PC-9 (cell line): ENCODE measurements at regions of chr18 and their contacts with region 1.

Region 1: DNA sequence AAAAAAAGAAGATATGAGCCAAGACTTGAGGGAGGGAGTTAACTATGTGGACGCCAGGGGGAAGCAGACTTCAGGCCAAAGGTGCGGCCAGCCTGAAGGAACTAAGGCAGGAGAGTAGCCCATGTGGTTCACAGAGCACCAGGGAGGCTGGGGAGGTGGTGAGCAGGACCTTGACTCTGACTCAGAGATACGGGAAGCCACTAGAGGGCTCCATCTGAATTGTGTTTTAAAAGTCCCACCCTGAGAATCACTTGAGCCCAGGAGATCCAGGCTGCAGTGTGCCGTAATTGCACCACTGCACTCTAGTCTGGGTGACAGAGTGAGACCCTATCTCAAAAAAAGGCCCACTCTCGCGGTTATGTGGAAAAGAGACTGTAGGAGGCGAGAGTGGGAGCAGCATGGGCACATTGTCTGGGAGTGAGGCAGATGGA is 12.3 kb downstream of the CEP192 start:
- DNase-seq: no peak
- H3K4me3 ChIP-seq: no peak overlapping the region
- H3K27ac ChIP-seq: no peak overlapping the region
- H3K4me1 ChIP-seq: no peaks in the 10 kb centered on the region
- H3K27me3 ChIP-seq: no peaks in the 10 kb centered on the region
- CTCF ChIP-seq: peak; percentile 53; the same call in 1 of the 2 replicates

Region 2: GRCh38 chr18:12361770-12362378 is 641.6 kb before region 1 on chr18:
- CTCF ChIA-PET with region 1: no interaction called
- POLR2A ChIA-PET with region 1: interaction called, 11 read pairs
- intact Hi-C with region 1: no loop called
- DNase-seq: no peak
- H3K4me3 ChIP-seq: no peak overlapping the region
- H3K27ac ChIP-seq: no peak overlapping the region
- H3K4me1 ChIP-seq: no peaks in the 10 kb centered on the region
- H3K27me3 ChIP-seq: no peaks in the 10 kb centered on the region
- CTCF ChIP-seq: no peak

Region 3: DNA sequence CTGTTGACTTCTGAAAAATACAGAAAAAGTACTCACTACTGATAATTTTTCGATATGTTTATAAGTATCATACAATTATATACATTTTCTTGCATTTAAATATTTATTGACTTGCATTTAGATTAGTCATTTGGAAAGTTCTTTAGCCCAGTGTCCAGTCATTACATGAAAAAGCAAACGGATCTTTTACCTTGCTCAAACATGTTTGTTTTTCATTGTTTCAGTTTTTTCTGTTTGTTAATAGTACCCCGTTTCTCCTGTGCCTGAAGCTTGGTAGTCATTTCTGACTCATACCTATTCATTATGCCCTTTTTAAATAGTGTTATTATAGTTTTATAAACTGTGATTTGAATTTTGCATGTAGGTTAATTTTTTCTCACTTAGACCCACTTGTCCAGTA is 15.8 kb after region 1 on chr18:
- CTCF ChIA-PET with region 1: no interaction called
- POLR2A ChIA-PET with region 1: no interaction called
- intact Hi-C with region 1: loop called (anchors 1 kb)
- DNase-seq: no peak
- H3K4me3 ChIP-seq: no peak overlapping the region
- H3K27ac ChIP-seq: 0 out of 2 replicates have a peak overlapping the region, but pooled peaks have one; percentile 6
- H3K4me1 ChIP-seq: no peaks in the 10 kb centered on the region
- H3K27me3 ChIP-seq: no peaks in the 10 kb centered on the region
- CTCF ChIP-seq: no peak